ENCODE measurements at regions of chr3 and their contacts with region 1.

Region 1: DNA sequence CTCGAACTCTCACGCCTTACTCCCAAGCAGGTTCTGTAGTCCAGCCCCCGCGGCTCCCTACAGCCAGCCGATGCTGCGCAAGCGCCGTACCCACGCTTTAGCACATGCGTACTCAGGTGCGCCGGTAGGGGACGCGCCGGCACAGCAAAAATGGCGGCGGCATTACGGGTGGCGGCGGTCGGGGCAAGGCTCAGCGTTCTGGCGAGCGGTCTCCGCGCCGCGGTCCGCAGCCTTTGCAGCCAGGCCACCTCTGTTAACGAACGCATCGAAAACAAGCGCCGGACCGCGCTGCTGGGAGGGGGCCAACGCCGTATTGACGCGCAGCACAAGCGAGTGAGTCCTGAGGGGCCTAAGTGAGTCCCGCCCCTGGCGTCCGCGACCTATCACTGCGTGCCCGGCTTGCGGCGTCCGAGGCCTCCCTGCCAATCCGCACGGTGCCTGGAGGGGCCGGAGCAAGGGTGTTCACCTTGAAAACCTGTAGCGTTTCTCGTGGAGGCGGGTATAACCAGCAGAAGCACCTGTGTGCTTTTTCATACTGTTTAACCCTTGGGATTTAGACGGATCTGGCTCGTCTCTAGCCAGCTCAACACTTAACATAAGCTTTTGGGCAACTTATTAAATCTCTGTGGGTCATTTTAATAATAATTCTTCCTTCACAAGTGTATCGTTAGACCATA is at the start of gene PCCB:
- DNase-seq: peak; percentile 96
- H3K4me3 ChIP-seq: peak within 1 kb of the TSS; percentile 31 to 73 (median 60)
- H3K27ac ChIP-seq: peak within 1 kb of the TSS; percentile 66
- H3K4me1 ChIP-seq: peaks cover 8% of the 10 kb centered on the region
- H3K27me3 ChIP-seq: no peaks in the 10 kb centered on the region
- CTCF ChIP-seq: peak; percentile 60 to 79
- POLR2A ChIP-seq: peak; percentile 81
- total RNA-seq, gene PCCB: 28.6 and 35.4 TPM in 2 replicates

Region 2: GRCh38 chr3:136093771-136094170 is 156.6 kb before region 1 on chr3:
- CTCF ChIA-PET with region 1: no interaction called
- POLR2A ChIA-PET with region 1: interaction called, 10 read pairs
- dilution Hi-C with region 1: no loop called
- intact Hi-C with region 1: no loop called
- DNase-seq: peak; percentile 56
- H3K4me3 ChIP-seq: no peak overlapping the region
- H3K27ac ChIP-seq: no peak overlapping the region
- H3K4me1 ChIP-seq: no peaks in the 10 kb centered on the region
- H3K27me3 ChIP-seq: no peaks in the 10 kb centered on the region
- CTCF ChIP-seq: no peak
- POLR2A ChIP-seq: no peak

Region 3: GRCh38 chr3:136142592-136142991 is 107.8 kb before region 1 on chr3:
- CTCF ChIA-PET with region 1: no interaction called
- POLR2A ChIA-PET with region 1: no interaction called
- dilution Hi-C with region 1: no loop called
- intact Hi-C with region 1: loop called (anchors 1 kb)
- DNase-seq: peak; percentile 87
- H3K4me3 ChIP-seq: no peak overlapping the region
- H3K27ac ChIP-seq: peak overlapping the region; percentile 81
- H3K4me1 ChIP-seq: peaks cover 18% of the 10 kb centered on the region
- H3K27me3 ChIP-seq: no peaks in the 10 kb centered on the region
- CTCF ChIP-seq: no peak
- POLR2A ChIP-seq: no peak

Region 4: DNA sequence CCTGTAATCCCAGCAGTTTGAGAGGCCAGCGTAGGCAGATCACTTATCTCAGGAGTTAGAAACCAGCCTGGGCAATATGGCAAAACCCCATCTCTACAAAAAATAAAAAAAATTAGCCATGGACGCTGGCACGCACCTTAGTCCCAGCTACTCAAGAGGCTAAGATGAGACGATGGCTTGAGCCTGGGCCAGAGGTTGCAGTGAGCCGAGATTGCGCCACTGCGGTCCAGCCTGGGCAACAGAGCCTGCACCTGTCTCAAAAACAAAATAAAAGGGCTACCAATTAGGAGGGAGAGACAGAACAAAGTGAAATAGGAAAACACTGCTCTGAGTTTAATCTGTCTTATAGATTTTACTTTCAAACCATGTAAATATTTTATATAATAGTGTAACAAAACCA is 88.0 kb before region 1 on chr3:
- CTCF ChIA-PET with region 1: no interaction called
- POLR2A ChIA-PET with region 1: no interaction called
- dilution Hi-C with region 1: no loop called
- intact Hi-C with region 1: no loop called
- DNase-seq: no peak
- H3K4me3 ChIP-seq: no peak overlapping the region
- H3K27ac ChIP-seq: no peak overlapping the region
- H3K4me1 ChIP-seq: peaks cover 5% of the 10 kb centered on the region
- H3K27me3 ChIP-seq: no peaks in the 10 kb centered on the region
- CTCF ChIP-seq: no peak
- POLR2A ChIP-seq: no peak